PC-9 (cell line): ENCODE measurements at regions of chr22 and their contacts with region 1.

Region 1: DNA sequence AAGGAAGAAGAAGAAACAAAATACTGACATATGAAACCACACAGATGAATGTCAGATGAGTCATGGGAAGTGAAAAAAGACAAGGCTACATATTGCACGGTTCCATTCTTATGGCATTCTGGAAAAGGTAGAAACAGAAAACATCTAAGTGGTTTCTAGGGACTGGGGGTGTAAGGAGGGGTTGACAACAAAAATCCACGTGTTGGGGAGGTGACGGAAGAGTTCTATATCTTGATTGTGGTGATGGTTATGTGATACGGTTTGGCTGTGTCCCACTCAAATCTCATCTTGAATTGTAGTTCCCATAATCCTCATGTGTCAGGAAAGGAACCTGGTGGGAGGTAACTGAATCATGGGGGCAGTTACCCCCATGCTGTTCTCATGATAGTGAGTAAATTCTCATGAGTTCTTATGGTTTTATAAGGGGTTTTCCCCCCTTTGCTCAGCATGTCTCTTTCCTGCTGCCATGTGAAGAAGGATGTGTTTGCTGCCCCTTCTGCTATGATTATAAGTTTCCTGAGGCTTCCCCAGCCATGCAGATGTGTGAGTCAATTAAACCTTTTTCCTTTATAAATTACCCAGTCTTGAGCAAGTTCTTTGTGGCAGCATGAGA is 6.4 kb upstream of the ARFGAP3 start:
- DNase-seq: peak; percentile 66 to 95
- H3K4me3 ChIP-seq: no peak overlapping the region
- H3K27ac ChIP-seq: peak overlapping the region; percentile 95
- H3K4me1 ChIP-seq: peaks cover 42% of the 10 kb centered on the region
- H3K27me3 ChIP-seq: no peaks in the 10 kb centered on the region
- CTCF ChIP-seq: no peak

Region 2: GRCh38 chr22:42614312-42615091 is 249.0 kb before region 1 on chr22 and contains the start of gene POLDIP3:
- CTCF ChIA-PET with region 1: interaction called, 11 read pairs
- POLR2A ChIA-PET with region 1: no interaction called
- intact Hi-C with region 1: loop called (anchors 2 kb)
- DNase-seq: peak; percentile 93 to 97
- H3K4me3 ChIP-seq: peak within 1 kb of the TSS; percentile 100
- H3K27ac ChIP-seq: peak within 1 kb of the TSS; percentile 96
- H3K4me1 ChIP-seq: peaks cover 30% of the 10 kb centered on the region
- H3K27me3 ChIP-seq: no peaks in the 10 kb centered on the region
- CTCF ChIP-seq: no peak
- total RNA-seq, gene POLDIP3: 60.1 and 62.9 TPM in 2 replicates

Region 3: DNA sequence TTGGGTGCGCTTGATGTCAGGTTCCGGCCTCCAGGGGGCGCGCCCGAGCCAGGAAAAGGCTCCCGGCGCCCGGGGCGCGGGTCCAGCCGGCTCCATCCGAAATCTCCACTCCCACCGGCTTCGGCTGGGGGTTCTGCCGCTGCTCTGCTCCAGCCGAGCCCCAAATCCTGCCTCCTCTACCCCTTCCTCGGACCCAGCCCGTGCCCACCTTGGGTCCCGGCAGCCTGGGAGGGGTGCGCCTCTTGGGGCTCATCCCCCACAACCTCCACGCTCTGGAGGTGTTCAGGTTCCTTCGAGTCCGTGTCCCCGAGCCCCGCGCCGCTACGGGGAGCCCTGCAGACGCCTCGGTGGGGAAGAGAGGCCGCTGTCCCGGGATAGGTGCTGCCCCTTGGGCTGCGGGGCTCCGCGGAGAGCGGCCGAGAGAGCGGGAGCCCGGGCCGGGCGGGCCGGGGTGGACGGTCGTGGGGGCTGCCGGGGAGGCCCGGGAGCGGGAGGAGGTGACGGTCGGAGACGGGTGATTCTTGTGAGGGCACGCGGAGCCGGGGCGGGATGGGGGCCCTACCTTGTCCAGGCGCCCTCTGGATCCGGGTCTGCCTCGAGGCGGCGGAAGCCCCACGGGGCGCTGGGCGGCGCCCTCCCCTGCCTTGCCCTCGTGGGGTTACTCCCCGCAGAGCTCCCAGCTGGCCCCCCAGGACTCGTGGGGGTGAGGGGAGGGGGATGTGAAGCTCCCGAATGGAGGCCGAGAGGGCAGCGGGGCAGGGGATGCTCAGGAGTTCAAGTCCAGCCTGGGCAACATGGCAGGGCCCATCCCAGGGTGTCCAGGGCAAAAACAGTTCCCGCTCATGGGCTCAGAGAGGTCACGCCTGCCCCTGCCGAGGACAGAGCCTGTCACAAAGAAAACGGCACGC is 201.1 kb before region 1 on chr22:
- CTCF ChIA-PET with region 1: no interaction called
- POLR2A ChIA-PET with region 1: no interaction called
- intact Hi-C with region 1: loop called (anchors 1 kb)
- DNase-seq: peak in 1 of 2 experiments; percentile 71
- H3K4me3 ChIP-seq: peak overlapping the region; percentile 60
- H3K27ac ChIP-seq: no peak overlapping the region
- H3K4me1 ChIP-seq: no peaks in the 10 kb centered on the region
- H3K27me3 ChIP-seq: no peaks in the 10 kb centered on the region
- CTCF ChIP-seq: peak; percentile 91

Region 4: DNA sequence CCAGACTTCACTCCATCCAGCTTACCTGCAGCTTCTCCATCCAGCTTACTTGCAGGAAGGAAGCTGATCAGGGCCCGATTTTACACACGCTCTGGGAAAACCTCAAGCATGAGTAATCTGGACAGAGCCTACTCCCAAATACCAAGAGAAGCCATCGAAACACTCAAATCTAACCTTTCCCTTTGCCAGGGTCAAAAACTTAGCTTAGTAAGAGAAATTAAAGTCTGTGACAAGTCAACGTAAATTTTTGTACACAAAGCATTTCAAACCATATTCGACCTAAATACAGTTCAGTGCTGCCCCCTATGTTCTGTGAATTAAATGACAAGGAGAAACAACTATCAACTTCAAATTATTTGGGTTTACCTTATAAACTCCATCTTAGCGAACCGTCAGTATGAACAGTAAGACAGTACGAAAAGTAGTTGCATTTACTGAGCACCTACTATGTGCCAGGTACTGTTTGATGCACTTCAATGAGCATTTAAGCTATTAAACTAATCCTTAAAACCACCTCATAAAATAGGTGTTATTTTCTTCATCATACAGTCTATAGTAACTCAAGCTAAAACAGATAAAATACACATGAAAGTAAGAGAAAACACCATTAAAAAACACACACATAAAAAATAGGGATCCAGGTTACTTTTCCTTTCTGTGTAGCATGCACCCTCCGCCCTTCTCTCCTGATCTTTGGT is 43.2 kb before region 1 on chr22:
- CTCF ChIA-PET with region 1: interaction called, 6 read pairs
- POLR2A ChIA-PET with region 1: interaction called, 10 read pairs
- intact Hi-C with region 1: no loop called
- DNase-seq: peak; percentile 23 to 40
- H3K4me3 ChIP-seq: no peak overlapping the region
- H3K27ac ChIP-seq: no peak overlapping the region
- H3K4me1 ChIP-seq: no peaks in the 10 kb centered on the region; the same call in 1 of the 2 replicates
- H3K27me3 ChIP-seq: no peaks in the 10 kb centered on the region
- CTCF ChIP-seq: peak; percentile 85

Region 5: DNA sequence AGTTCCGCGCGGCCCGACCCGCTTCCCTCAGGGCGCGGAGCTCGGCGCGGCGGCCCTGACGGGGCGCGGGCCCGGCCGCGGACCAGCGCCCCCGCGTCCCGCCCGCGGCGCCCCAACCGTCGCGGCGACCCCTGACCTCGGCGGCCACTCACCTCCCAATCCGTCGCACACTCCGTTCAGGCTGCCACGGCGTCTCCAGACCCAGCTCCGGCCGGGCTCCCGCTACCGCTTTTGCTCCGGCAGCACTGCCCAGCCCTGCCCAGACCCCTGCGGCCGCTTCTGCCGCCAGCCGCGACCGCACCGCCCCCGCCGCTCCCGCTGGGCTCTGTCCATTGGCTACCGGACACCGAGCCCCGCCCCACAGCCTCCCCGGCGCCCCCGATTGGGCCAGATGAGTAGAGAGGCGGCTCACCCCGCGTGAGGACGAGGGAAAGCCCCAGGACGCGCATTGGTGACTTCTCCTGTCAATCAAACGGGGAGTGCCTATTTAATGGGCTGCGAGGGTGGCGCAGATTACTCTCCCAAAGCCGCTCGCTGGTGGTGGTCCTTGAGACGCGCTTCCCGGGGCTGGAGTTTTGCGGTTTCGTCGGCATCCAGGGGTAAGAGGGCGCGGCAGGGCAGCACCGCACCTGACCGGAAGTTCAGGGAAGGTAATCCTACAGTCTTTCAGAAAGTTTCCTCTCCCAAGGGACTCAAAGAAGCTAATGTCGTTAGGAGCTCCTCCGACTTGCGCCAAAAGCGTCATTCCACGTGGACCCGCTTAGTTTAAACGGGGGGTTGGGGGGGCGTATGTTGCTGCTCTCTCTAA is 151.6 kb after region 1 on chr22 and contains the start of gene PACSIN2:
- CTCF ChIA-PET with region 1: interaction called, 10 read pairs
- POLR2A ChIA-PET with region 1: interaction called, 3 read pairs
- intact Hi-C with region 1: loop called (anchors 5 kb)
- DNase-seq: peak; percentile 97 to 99
- H3K4me3 ChIP-seq: peak within 1 kb of the TSS; percentile 66
- H3K27ac ChIP-seq: peak within 1 kb of the TSS; percentile 45
- H3K4me1 ChIP-seq: peaks cover 50% of the 10 kb centered on the region
- H3K27me3 ChIP-seq: no peaks in the 10 kb centered on the region
- CTCF ChIP-seq: no peak
- total RNA-seq, gene PACSIN2: 102 and 103 TPM in 2 replicates

Region 6: DNA sequence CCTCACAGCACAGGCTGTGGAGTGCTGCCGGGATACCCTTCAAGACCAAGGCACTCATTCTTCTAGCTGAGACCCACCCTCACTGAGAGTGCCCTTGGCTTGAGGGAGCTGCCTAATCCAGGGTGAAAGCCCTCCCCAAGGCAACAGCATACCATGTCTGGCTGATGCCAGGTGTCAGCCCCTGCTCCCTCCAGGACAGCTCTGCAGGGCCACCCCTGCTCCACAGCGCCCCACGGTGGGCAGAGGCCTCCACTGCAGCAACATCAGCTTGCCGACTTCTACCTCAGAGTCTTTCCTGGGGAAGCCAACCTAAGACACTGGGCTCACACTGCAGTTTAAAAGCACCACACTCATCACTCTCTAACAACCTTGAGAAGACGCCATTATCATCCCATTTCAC is 196.7 kb after region 1 on chr22:
- CTCF ChIA-PET with region 1: interaction called, 17 read pairs
- POLR2A ChIA-PET with region 1: no interaction called
- intact Hi-C with region 1: no loop called
- DNase-seq: peak in 1 of 2 experiments; percentile 56
- H3K4me3 ChIP-seq: no peak overlapping the region
- H3K27ac ChIP-seq: no peak overlapping the region
- H3K4me1 ChIP-seq: no peaks in the 10 kb centered on the region
- H3K27me3 ChIP-seq: no peaks in the 10 kb centered on the region
- CTCF ChIP-seq: peak; percentile 92

Region 7: GRCh38 chr22:43080616-43081015 is 217.2 kb after region 1 on chr22:
- CTCF ChIA-PET with region 1: no interaction called
- POLR2A ChIA-PET with region 1: no interaction called
- intact Hi-C with region 1: no loop called
- DNase-seq: peak; percentile 31 to 80
- H3K4me3 ChIP-seq: no peak overlapping the region
- H3K27ac ChIP-seq: no peak overlapping the region
- H3K4me1 ChIP-seq: peaks cover 7% of the 10 kb centered on the region
- H3K27me3 ChIP-seq: no peaks in the 10 kb centered on the region
- CTCF ChIP-seq: no peak

Region 8: GRCh38 chr22:43230971-43231723 is 367.7 kb after region 1 on chr22:
- CTCF ChIA-PET with region 1: interaction called, 11 read pairs
- POLR2A ChIA-PET with region 1: no interaction called
- intact Hi-C with region 1: no loop called
- DNase-seq: peak in 1 of 2 experiments; percentile 77
- H3K4me3 ChIP-seq: no peak overlapping the region
- H3K27ac ChIP-seq: no peak overlapping the region
- H3K4me1 ChIP-seq: no peaks in the 10 kb centered on the region
- H3K27me3 ChIP-seq: peaks cover 46% of the 10 kb centered on the region
- CTCF ChIP-seq: peak; percentile 99